ENCODE measurements at regions of chrX and their contacts with region 1.

Region 1: DNA sequence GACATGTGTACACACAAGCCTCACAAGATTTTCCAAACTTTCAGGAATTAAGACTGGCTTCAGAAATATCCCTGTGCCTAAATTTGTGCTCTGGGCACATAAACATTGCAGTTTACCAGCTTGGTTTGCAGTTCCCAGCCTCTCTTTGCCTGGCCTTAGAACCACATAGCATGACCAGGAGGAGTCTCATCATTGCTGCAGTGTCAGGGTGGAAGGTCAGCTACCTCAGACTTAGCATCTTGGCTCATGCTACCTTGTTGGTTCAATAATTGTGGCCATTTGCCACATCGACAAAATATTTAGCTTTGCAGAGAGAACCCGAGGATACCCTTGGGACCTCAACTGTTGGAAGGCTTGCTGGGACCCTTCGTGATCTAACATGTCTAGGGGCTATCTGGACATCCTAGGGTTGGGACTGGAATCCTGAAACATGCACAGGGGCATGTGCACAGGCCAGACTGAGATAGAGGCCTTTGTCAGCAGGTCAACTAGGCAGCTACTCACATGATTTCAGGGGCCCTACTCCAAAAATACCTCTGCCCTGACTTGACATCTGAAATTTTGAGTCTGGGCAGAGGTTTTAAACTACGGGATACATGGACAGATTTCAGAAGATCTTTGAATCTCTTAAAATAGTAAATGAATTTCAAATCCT is 8.0 kb upstream of the SUPT20HL2 start:
- DNase-seq: no peak
- H3K4me3 ChIP-seq: no peak overlapping the region
- H3K27ac ChIP-seq: no peak overlapping the region
- H3K4me1 ChIP-seq: no peaks in the 10 kb centered on the region
- H3K27me3 ChIP-seq: no peaks in the 10 kb centered on the region
- CTCF ChIP-seq: no peak

Region 2: GRCh38 chrX:24306440-24306839 is 15.4 kb before region 1 on chrX:
- intact Hi-C with region 1: loop called (anchors 1 kb)
- DNase-seq: no peak
- H3K4me3 ChIP-seq: no peak overlapping the region
- H3K27ac ChIP-seq: no peak overlapping the region
- H3K4me1 ChIP-seq: no peaks in the 10 kb centered on the region
- H3K27me3 ChIP-seq: no peaks in the 10 kb centered on the region
- CTCF ChIP-seq: no peak

Region 3: GRCh38 chrX:24332878-24333277 is 11.0 kb after region 1 on chrX:
- intact Hi-C with region 1: no loop called
- DNase-seq: no peak
- H3K4me3 ChIP-seq: no peak overlapping the region
- H3K27ac ChIP-seq: no peak overlapping the region
- H3K4me1 ChIP-seq: no peaks in the 10 kb centered on the region
- H3K27me3 ChIP-seq: no peaks in the 10 kb centered on the region
- CTCF ChIP-seq: no peak